PC-9 (cell line): ENCODE measurements at regions of chr11 and their contacts with region 1.

Region 1: GRCh38 chr11:67053896-67054842 is 2.5 kb upstream of the RHOD start:
- DNase-seq: peak; percentile 52 to 77
- H3K4me3 ChIP-seq: no peak overlapping the region
- H3K27ac ChIP-seq: peak overlapping the region; percentile 64
- H3K4me1 ChIP-seq: peaks cover 48% of the 10 kb centered on the region
- H3K27me3 ChIP-seq: no peaks in the 10 kb centered on the region
- CTCF ChIP-seq: peak; percentile 86

Region 2: GRCh38 chr11:66919923-66920322 is 134.2 kb before region 1 on chr11:
- CTCF ChIA-PET with region 1: no interaction called
- POLR2A ChIA-PET with region 1: interaction called, 11 read pairs
- intact Hi-C with region 1: no loop called
- DNase-seq: no peak
- H3K4me3 ChIP-seq: no peak overlapping the region
- H3K27ac ChIP-seq: no peak overlapping the region
- H3K4me1 ChIP-seq: no peaks in the 10 kb centered on the region
- H3K27me3 ChIP-seq: no peaks in the 10 kb centered on the region
- CTCF ChIP-seq: no peak

Region 3: GRCh38 chr11:67022328-67022927 is 31.7 kb before region 1 on chr11:
- CTCF ChIA-PET with region 1: interaction called, 4 read pairs
- POLR2A ChIA-PET with region 1: interaction called, 3 read pairs
- intact Hi-C with region 1: loop called (anchors 1 kb)
- DNase-seq: peak; percentile 86 to 95
- H3K4me3 ChIP-seq: peak overlapping the region; percentile 80
- H3K27ac ChIP-seq: peak overlapping the region; percentile 50
- H3K4me1 ChIP-seq: peaks cover 44% of the 10 kb centered on the region
- H3K27me3 ChIP-seq: no peaks in the 10 kb centered on the region
- CTCF ChIP-seq: no peak

Region 4: DNA sequence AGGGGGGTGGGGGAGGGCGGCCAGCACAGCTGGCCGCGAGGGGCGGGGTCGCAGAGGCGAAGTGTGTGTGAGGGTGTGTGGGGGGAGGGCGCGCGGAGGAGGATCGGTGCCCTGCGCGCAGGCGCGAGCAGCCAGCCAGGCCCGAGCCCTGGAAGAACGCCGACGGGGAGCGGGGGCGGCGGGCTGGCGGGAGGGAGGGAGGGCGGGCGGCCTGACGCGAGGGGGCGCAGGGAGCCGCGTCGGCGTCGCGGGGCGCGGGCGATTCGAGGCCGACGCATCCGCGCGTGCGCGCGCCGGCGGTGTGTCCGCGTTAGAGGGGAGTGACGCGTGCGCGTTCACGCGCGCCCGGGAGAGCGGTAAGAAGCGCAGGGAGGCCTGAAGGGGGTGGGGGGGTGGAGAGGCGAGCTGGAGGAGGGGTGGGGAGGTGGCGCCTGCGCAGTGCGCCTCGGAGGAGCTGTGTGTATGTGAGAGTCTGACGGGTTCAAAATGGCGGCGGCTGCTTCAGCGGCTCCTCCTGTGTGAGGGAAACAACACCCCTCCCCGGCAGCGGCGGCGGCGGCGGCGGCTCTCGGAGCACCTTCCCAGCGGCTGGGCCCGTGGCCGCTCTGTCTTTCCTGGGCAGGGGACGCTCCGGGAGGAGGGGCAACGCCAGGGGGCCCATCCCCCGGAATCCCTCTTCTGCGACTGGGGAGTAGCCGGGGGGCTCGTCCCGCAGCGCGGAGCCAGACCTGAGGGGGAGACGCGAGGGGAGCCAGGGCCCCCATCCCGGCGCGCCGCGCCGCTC is 64.8 kb after region 1 on chr11 and contains the start of gene KDM2A:
- CTCF ChIA-PET with region 1: no interaction called
- POLR2A ChIA-PET with region 1: interaction called, 5 read pairs
- intact Hi-C with region 1: loop called (anchors 2 kb)
- DNase-seq: peak; percentile 91 to 98
- H3K4me3 ChIP-seq: peak within 1 kb of the TSS; percentile 83
- H3K27ac ChIP-seq: peak within 1 kb of the TSS; percentile 82
- H3K4me1 ChIP-seq: peaks cover 13% of the 10 kb centered on the region
- H3K27me3 ChIP-seq: no peaks in the 10 kb centered on the region
- CTCF ChIP-seq: no peak
- total RNA-seq, gene KDM2A: 117 and 120 TPM in 2 replicates

Region 5: DNA sequence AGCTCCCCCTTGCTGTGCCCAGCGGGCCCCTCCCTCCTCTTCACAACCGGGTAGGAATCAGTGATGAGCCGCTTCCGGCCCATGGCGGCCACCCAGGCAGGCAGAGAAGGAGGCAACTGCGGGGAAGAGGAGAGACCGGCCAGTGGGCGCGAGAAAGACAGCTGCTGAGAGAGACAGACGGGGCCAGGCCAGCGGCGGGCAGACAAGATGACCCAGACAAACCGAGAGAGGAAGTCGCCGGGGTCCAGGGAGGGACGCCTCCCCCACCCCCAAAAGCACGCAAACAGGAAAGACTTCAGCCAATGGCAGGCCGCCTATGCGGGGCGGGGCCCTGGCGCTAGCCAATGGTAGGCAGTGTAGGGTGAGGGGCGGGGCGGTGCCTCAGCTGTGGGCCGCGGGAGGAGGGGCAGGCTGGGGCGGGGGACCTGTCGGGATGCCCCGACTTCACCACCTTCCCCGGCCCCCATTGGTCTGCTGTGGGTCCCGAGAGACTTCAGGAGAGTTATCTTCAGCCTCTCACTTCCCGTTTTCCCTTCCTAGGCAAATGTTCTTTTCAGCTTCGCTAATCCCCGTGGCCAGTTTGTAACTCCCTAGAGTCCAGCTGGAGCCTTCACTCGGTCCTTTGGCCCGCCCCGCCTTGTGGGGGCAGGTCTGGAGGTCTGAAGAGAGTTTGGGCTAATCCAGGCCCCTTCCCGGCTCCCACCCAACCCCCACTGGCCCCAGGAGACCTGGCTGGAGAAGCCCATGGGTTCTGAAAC is 299.3 kb after region 1 on chr11 and contains the start of gene POLD4:
- CTCF ChIA-PET with region 1: no interaction called
- POLR2A ChIA-PET with region 1: interaction called, 19 read pairs
- intact Hi-C with region 1: no loop called
- DNase-seq: peak; percentile 90 to 99
- H3K4me3 ChIP-seq: peak within 1 kb of the TSS; percentile 93
- H3K27ac ChIP-seq: peak within 1 kb of the TSS; percentile 90
- H3K4me1 ChIP-seq: peaks cover 70% of the 10 kb centered on the region
- H3K27me3 ChIP-seq: no peaks in the 10 kb centered on the region
- CTCF ChIP-seq: peak; percentile 24; the same call in 1 of the 2 replicates
- total RNA-seq, gene POLD4: 67.1 and 83.7 TPM in 2 replicates